SK-N-SH (cell line): ENCODE measurements at regions of chr3 and their contacts with region 1.

Region 1: DNA sequence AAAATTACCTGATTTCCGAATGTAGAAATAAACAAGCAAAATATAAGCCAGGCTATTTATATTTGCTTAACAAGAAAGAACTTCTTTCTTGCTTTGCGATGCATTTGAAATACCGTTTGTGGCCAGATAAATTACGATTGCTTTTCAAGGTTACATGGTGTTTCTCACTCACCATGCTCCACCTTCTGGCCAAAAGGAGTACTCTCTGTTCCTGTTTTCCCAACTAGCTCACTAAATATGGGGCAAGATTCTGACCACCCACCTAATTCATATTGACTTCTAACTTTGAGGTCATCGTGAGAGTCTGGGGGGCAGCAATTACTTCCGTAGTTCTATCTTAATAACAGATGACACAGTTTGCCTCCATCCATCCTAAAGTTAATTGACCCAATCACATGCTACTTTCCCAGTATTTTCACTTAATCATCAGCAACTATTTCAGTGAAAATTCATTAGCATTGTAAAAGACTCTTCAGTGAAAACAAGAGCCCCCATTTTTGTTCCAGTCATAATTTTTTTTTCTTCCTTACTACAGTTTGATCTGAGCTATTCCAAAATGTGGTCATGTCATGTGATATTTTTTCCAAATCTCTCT is 25.9 kb downstream of the ACP3 start:
- DNase-seq: peak; percentile 41
- H3K4me3 ChIP-seq: peak overlapping the region in 1 of 2 experiments; percentile 25; a peak in 1 of 4 replicates
- H3K27ac ChIP-seq: no peak overlapping the region
- H3K4me1 ChIP-seq: no peaks in the 10 kb centered on the region
- H3K27me3 ChIP-seq: peaks cover 6% of the 10 kb centered on the region; the same call in 1 of the 2 replicates
- CTCF ChIP-seq: peak; percentile 82
- EP300 ChIP-seq: no peak
- RAD21 ChIP-seq: peak; percentile 77

Region 2: GRCh38 chr3:132245552-132246142 is 97.5 kb before region 1 on chr3:
- CTCF ChIA-PET with region 1: interaction called, 98 read pairs
- POLR2A ChIA-PET with region 1: no interaction called
- DNase-seq: no peak
- H3K4me3 ChIP-seq: no peak overlapping the region
- H3K27ac ChIP-seq: no peak overlapping the region
- H3K4me1 ChIP-seq: no peaks in the 10 kb centered on the region; a peak in 1 of 4 replicates
- H3K27me3 ChIP-seq: no peaks in the 10 kb centered on the region; the same call in 1 of the 2 replicates
- CTCF ChIP-seq: no peak
- EP300 ChIP-seq: no peak
- RAD21 ChIP-seq: no peak

Region 3: DNA sequence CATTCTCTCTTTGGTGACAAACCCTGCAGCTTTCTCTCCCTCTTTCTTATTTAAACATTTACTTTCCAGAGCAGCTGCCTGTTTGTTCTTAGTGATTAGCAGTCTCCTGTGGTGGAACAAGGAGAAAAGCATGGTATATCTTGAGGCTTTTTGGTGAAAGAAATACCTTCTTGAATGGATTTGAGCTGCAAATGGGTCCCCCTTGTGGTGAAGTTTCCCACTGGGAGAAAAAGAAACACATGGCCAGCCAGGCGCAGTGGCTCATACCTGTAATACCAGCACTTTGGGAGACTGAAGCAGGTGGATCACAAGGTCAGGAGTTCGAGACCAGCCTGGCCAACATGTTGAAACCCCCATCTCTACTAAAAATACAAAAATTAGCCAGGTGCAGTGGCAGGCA is 74.2 kb before region 1 on chr3:
- CTCF ChIA-PET with region 1: interaction called, 11 read pairs
- POLR2A ChIA-PET with region 1: no interaction called
- DNase-seq: no peak
- H3K4me3 ChIP-seq: no peak overlapping the region
- H3K27ac ChIP-seq: no peak overlapping the region
- H3K4me1 ChIP-seq: no peaks in the 10 kb centered on the region
- H3K27me3 ChIP-seq: no peaks in the 10 kb centered on the region
- CTCF ChIP-seq: peak; percentile 51
- EP300 ChIP-seq: no peak
- RAD21 ChIP-seq: 0 out of 2 replicates have a peak, but pooled peaks have one; percentile 20

Region 4: DNA sequence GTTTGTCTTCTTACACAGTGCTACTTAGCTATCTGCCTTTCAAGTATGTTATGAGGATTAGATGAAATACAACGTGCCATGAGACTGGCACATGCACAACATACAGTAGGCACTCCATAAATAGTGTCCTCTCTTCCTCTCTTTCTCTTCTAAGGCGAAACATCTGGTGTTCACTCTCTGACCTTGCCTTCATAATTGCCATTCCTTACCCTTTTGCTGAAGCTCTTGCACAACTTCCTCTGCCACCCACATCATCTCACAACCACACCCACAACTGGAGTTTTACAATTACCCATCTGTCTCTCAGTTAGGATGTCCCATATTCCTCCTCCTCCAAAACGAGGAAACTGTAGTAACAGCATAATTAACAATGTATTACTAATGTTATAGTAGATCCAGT is 52.3 kb before region 1 on chr3:
- CTCF ChIA-PET with region 1: interaction called, 13 read pairs
- POLR2A ChIA-PET with region 1: no interaction called
- DNase-seq: no peak
- H3K4me3 ChIP-seq: no peak overlapping the region
- H3K27ac ChIP-seq: no peak overlapping the region
- H3K4me1 ChIP-seq: no peaks in the 10 kb centered on the region; a peak in 1 of 4 replicates
- H3K27me3 ChIP-seq: no peaks in the 10 kb centered on the region
- CTCF ChIP-seq: no peak
- EP300 ChIP-seq: no peak
- RAD21 ChIP-seq: no peak

Region 5: DNA sequence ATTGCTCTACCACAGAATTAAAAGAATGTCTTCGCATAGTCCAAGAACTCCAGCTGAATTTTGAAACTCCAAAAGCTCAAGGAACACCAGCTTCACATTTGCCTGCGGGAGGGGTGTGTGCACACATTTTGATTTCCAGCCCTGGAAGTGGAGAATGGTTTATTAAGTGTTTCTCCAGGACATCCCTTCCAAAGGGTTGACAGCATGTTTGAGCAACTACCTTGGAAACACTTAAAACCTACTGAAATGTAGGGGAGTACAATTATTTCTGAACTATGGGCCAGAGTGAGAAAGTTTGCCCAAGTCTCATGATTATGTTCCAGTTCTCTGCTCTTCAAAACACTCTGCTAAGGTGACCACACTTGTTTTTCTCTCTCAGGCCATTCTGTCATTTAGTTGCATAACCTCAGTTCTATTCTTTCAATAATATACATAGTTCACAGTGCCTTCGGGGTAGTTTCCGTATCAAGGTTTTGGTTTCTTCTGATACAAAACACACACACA is 18.0 kb before region 1 on chr3:
- CTCF ChIA-PET with region 1: interaction called, 24 read pairs
- POLR2A ChIA-PET with region 1: no interaction called
- DNase-seq: no peak
- H3K4me3 ChIP-seq: no peak overlapping the region
- H3K27ac ChIP-seq: no peak overlapping the region
- H3K4me1 ChIP-seq: no peaks in the 10 kb centered on the region
- H3K27me3 ChIP-seq: peaks cover 2% of the 10 kb centered on the region; the same call in 1 of the 2 replicates
- CTCF ChIP-seq: no peak
- EP300 ChIP-seq: no peak
- RAD21 ChIP-seq: no peak